GM12878 (cell line): ENCODE measurements at regions of chr10 and their contacts with region 1.

Region 1: DNA sequence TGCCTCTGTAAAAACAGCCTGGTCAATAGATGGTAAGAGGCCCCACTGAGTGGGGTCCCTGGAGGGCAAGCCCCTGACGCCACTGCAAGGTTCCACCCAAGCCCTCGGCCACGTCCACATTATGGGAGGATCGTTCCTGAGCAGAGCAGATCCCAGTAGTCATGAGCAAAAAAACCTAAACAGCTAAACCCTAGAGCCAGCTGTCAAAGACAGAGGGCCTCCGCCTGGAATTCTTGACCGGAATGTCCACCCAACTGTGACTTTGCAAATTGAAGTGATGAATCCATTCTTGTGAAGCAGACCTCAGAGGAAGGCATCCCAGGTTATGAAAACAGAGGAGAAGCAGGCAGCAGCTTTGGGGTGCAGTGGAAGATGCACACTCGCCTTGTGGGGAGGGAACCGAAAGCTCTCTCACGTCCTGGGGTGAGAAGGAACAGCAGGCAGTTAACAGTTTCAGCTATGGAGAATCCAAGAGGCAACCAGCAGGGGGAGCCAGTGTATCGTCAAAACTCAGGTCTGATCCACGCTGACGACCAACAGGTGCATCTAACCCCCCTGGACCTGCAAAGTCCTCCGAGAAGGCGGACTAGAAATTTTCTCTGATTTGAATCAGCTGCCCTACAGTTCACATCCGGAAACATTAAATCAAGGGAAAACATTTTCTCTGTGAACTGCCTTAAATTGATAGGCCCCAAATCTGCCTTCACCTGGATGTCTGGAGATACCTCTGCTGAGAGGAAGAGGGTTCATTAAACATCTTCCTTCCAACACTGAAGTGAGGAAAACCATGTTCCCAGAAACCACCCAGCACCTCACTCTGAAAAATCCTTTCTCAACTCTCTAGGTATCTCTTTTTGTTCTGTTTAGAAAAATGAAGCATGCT is 139.1 kb upstream of the PFKP start:
- DNase-seq: peak; percentile 54
- ATAC-seq: peak; percentile 98
- H3K4me3 ChIP-seq: no peak overlapping the region
- H3K27ac ChIP-seq: no peak overlapping the region
- H3K4me1 ChIP-seq: no peaks in the 10 kb centered on the region
- H3K27me3 ChIP-seq: peaks cover 3 to 5% of the 10 kb centered on the region in 2 experiments; a peak in 3 of 4 replicates
- CTCF ChIP-seq: peak; percentile 73 to 85 (median 74)
- EP300 ChIP-seq: no peak
- POLR2A ChIP-seq: no peak
- RAD21 ChIP-seq: peak; percentile 85

Region 2: GRCh38 chr10:2619472-2619871 is 308.7 kb before region 1 on chr10:
- CTCF ChIA-PET with region 1: no interaction called
- POLR2A ChIA-PET with region 1: no interaction called
- RAD21 ChIA-PET with region 1: no interaction called
- SMC1A ChIA-PET with region 1: no interaction called
- in situ Hi-C with region 1: no loop called
- intact Hi-C with region 1: loop called (anchors 1 kb)
- DNase-seq: no peak
- ATAC-seq: peak; percentile 79
- H3K4me3 ChIP-seq: no peak overlapping the region
- H3K27ac ChIP-seq: no peak overlapping the region
- H3K4me1 ChIP-seq: no peaks in the 10 kb centered on the region
- H3K27me3 ChIP-seq: no peaks in the 10 kb centered on the region
- CTCF ChIP-seq: peak; percentile 33 to 64 (median 58); a peak in 5 of 6 replicates
- EP300 ChIP-seq: no peak
- POLR2A ChIP-seq: no peak
- RAD21 ChIP-seq: 0 out of 2 replicates have a peak, but pooled peaks have one; percentile 15

Region 3: DNA sequence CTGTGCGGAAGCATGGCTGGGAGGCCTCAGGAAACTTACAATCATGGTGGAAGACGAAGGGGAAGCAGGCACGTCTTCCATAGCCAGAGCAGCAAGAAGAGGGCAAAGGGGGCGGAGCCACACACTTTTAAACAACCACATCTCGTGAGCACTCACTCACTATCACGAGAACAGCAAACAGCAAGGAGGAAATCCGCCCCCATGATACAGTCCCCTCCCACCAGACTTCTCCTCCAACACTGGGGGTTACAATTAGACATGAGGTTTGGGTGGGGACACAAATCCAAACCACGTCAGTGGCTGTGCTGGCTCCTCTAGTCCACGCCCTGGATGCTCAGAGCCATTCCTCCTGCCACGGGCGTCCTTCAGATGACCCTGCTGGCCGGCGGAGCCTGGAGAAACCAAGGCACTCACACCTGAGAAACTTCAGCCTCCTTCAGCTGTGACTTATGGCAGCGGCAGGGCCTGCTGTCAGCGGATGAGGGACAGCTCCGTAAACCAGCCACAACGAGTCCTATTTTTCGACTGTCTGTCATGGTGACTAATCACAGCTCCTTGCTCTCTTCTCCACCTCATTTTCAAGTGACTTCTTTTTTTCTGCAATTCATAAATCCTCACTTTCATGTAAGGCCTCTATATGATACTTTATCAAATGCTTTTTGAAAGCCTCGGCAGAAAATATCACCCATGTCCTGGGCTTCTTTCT is 28.8 kb before region 1 on chr10:
- CTCF ChIA-PET with region 1: no interaction called
- POLR2A ChIA-PET with region 1: no interaction called
- RAD21 ChIA-PET with region 1: no interaction called
- SMC1A ChIA-PET with region 1: no interaction called
- in situ Hi-C with region 1: no loop called
- intact Hi-C with region 1: no loop called
- DNase-seq: no peak
- ATAC-seq: no peak
- H3K4me3 ChIP-seq: no peak overlapping the region
- H3K27ac ChIP-seq: no peak overlapping the region
- H3K4me1 ChIP-seq: no peaks in the 10 kb centered on the region
- H3K27me3 ChIP-seq: peaks cover 0 to 2% of the 10 kb centered on the region in 2 experiments; a peak in 2 of 4 replicates
- CTCF ChIP-seq: no peak
- EP300 ChIP-seq: no peak
- POLR2A ChIP-seq: no peak
- RAD21 ChIP-seq: no peak